SK-N-SH (cell line): ENCODE measurements at regions of chr22 and their contacts with region 1.

Region 1: DNA sequence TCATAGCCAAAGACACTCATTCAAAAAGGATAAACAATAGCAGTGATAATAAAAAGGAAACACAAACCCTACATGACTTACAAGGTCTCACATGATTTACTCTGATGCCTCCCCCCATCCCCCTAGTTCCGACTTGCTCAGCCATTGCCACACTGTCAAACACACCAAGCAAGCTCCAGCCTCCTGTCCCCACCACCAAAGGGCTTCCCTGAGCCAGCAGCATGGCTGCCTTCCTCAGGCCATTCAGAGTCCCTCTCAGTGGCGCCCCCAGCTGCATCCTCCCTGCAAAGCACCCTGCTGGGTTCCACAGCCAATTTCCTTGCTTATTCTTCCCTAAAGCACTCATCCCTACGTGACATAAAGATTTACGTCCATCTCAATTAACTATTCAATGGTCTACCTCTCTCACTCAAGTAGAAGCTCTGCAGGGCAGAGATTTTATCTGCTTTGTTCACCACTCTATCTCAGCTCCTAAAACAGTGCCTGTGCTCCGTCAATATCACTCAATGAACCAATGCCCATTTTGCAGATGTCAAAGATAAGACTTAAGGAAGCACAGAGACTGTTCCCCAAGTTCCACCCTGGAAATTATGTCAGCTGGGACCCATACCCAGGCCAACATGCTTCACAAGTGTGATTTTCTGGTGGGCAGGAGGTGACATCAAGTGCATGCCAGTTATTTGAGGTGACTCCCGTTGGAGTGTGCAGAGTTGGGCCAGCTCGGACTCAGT is 106.9 kb downstream of the SYN3 start:
- DNase-seq: peak; percentile 36
- H3K4me3 ChIP-seq: no peak overlapping the region
- H3K27ac ChIP-seq: peak overlapping the region in 1 of 2 experiments; percentile 97; a peak in 2 of 4 replicates
- H3K4me1 ChIP-seq: peaks cover 0 to 34% of the 10 kb centered on the region in 2 experiments; a peak in 2 of 4 replicates
- H3K27me3 ChIP-seq: no peaks in the 10 kb centered on the region
- CTCF ChIP-seq: no peak
- EP300 ChIP-seq: peak in 1 of 2 experiments; percentile 5; a peak in 1 of 4 replicates
- RAD21 ChIP-seq: peak; percentile 23; the same call in 1 of the 2 replicates

Region 2: GRCh38 chr22:32961497-32961896 is 10.3 kb after region 1 on chr22:
- CTCF ChIA-PET with region 1: interaction called, 15 read pairs
- POLR2A ChIA-PET with region 1: no interaction called
- DNase-seq: no peak
- H3K4me3 ChIP-seq: no peak overlapping the region
- H3K27ac ChIP-seq: no peak overlapping the region
- H3K4me1 ChIP-seq: peaks cover 0 to 19% of the 10 kb centered on the region in 2 experiments; a peak in 2 of 4 replicates
- H3K27me3 ChIP-seq: no peaks in the 10 kb centered on the region
- CTCF ChIP-seq: no peak
- EP300 ChIP-seq: no peak
- RAD21 ChIP-seq: no peak